MCF 10A (cell line): ENCODE measurements at regions of chr4 and their contacts with region 1.

Region 1: DNA sequence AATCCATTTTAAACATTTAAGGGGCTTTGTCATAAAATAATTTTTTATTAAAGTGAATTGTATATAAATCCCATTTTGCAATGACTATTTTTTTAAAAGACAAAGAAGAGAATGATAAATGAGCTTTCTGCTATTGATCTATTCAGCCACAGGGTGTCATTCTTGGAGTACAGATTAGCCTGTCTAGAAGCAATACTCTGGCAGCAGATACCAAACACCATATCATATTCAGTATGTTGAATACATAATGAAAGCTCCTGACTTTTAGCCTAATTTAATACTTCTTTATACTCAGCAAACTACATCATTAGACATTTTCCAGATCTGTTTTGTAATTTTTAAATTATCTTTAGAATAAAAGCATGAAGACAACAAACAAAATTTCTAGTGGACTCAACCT is 496.3 kb downstream of the PDGFC start:
- DNase-seq: peak; percentile 70
- H3K4me3 Mint-ChIP-seq: no peak overlapping the region
- H3K27ac Mint-ChIP-seq: peak overlapping the region; percentile 88
- H3K4me1 Mint-ChIP-seq: peaks cover 11% of the 10 kb centered on the region
- H3K27me3 Mint-ChIP-seq: no peaks in the 10 kb centered on the region
- CTCF ChIP-seq: peak; percentile 65

Region 2: DNA sequence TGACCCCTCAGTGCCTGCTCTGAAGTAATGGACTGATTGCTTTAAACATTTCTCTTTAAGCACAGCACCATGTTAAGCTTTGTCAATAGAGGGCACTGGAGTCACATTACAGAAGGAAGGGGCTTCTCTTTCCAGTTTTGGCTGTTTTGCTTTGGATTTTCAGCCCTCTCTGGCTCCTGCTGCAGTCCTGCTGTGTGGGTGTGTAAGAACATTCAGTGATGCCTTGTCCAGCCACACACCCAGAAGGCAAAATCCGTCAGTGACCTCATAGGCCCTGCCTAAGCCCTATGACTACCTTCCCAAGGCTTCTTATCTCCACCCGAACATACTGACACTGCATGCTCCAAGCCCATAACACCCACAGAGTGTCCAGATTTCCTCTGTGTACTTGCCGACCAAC is 306.3 kb before region 1 on chr4:
- CTCF ChIA-PET with region 1: interaction called, 20 read pairs
- POLR2A ChIA-PET with region 1: interaction called, 3 read pairs
- intact Hi-C with region 1: loop called (anchors 1 kb)
- DNase-seq: peak; percentile 76
- H3K4me3 Mint-ChIP-seq: no peak overlapping the region
- H3K27ac Mint-ChIP-seq: peak overlapping the region; percentile 56
- H3K4me1 Mint-ChIP-seq: peaks cover 17% of the 10 kb centered on the region
- H3K27me3 Mint-ChIP-seq: no peaks in the 10 kb centered on the region
- CTCF ChIP-seq: peak; percentile 43

Region 3: DNA sequence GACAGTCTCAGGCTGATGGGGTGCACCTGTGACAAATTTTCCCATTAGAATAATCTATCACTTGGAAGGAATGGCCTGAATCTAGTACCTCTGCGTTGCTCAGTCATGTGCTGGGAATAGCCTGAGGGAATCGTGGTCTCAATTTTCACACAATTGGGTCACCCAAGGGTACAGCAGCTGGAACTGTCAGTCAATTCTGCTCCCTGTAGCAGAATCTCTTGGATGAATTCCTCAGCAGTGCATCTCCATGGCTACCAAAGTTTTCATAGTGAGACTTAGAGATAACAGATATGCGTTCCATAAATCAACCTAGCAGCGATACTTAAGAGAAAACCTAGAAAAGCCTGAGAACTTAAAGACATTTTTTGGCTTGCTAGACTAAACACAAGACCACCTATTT is 232.9 kb before region 1 on chr4:
- CTCF ChIA-PET with region 1: no interaction called
- POLR2A ChIA-PET with region 1: no interaction called
- intact Hi-C with region 1: no loop called
- DNase-seq: no peak
- H3K4me3 Mint-ChIP-seq: no peak overlapping the region
- H3K27ac Mint-ChIP-seq: no peak overlapping the region
- H3K4me1 Mint-ChIP-seq: no peaks in the 10 kb centered on the region
- H3K27me3 Mint-ChIP-seq: no peaks in the 10 kb centered on the region
- CTCF ChIP-seq: no peak

Region 4: GRCh38 chr4:156558373-156559025 is 83.2 kb after region 1 on chr4:
- CTCF ChIA-PET with region 1: no interaction called
- POLR2A ChIA-PET with region 1: no interaction called
- intact Hi-C with region 1: no loop called
- DNase-seq: no peak
- H3K4me3 Mint-ChIP-seq: no peak overlapping the region
- H3K27ac Mint-ChIP-seq: peak overlapping the region; percentile 49
- H3K4me1 Mint-ChIP-seq: peaks cover 15% of the 10 kb centered on the region
- H3K27me3 Mint-ChIP-seq: no peaks in the 10 kb centered on the region
- CTCF ChIP-seq: no peak

Region 5: DNA sequence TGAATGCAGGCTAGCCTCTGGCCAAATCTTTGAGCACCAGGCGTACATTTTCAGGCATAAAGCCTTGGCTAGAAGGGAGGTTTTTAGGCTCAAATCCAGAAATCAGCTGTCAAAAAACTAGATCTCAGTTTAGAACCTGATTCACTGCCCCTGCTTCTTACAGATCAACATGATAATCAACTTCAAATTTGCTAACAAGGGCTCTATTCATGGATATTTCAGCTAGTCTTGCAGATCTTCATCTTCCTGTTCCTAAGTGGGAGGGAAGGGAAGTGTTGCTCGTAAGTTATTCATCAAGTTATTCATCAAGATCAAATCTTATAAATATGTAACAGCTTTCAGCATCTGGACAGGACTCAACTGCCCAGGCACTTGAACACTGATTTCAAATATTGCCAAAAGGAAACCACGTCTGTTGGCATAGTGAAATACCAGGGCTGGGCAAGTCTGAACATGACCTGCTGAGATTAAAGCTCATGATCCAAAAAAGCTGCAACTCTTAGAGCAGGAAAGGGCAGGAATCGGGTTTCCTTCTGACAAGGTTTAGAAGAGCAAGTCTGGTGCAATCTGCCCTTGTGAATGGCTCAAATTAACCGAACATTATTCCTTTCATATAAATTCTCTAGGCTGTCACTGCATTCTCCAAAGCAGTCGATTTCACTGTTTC is 296.0 kb after region 1 on chr4:
- CTCF ChIA-PET with region 1: interaction called, 4 read pairs
- POLR2A ChIA-PET with region 1: interaction called, 5 read pairs
- intact Hi-C with region 1: loop called (anchors 5 kb)
- DNase-seq: peak; percentile 98
- H3K4me3 Mint-ChIP-seq: peak overlapping the region; percentile 63
- H3K27ac Mint-ChIP-seq: peak overlapping the region; percentile 52
- H3K4me1 Mint-ChIP-seq: peaks cover 39% of the 10 kb centered on the region
- H3K27me3 Mint-ChIP-seq: no peaks in the 10 kb centered on the region
- CTCF ChIP-seq: no peak

Region 6: GRCh38 chr4:156941940-156942548 is 466.7 kb after region 1 on chr4:
- CTCF ChIA-PET with region 1: interaction called, 3 read pairs
- POLR2A ChIA-PET with region 1: interaction called, 6 read pairs
- intact Hi-C with region 1: loop called (anchors 5 kb)
- DNase-seq: peak; percentile 77
- H3K4me3 Mint-ChIP-seq: no peak overlapping the region
- H3K27ac Mint-ChIP-seq: peak overlapping the region; percentile 12
- H3K4me1 Mint-ChIP-seq: peaks cover 48% of the 10 kb centered on the region
- H3K27me3 Mint-ChIP-seq: no peaks in the 10 kb centered on the region
- CTCF ChIP-seq: no peak

Region 7: GRCh38 chr4:157075811-157076577 is 600.7 kb after region 1 on chr4 and contains the start of gene GLRB:
- CTCF ChIA-PET with region 1: no interaction called
- POLR2A ChIA-PET with region 1: no interaction called
- intact Hi-C with region 1: no loop called
- DNase-seq: peak; percentile 39
- H3K4me3 Mint-ChIP-seq: peak within 1 kb of the TSS; percentile 91
- H3K27ac Mint-ChIP-seq: no peak within 1 kb of the TSS
- H3K4me1 Mint-ChIP-seq: peaks cover 8% of the 10 kb centered on the region
- H3K27me3 Mint-ChIP-seq: no peaks in the 10 kb centered on the region
- CTCF ChIP-seq: no peak
- total RNA-seq, gene GLRB: 5.9 and 7.1 TPM in 2 replicates

Region 8: DNA sequence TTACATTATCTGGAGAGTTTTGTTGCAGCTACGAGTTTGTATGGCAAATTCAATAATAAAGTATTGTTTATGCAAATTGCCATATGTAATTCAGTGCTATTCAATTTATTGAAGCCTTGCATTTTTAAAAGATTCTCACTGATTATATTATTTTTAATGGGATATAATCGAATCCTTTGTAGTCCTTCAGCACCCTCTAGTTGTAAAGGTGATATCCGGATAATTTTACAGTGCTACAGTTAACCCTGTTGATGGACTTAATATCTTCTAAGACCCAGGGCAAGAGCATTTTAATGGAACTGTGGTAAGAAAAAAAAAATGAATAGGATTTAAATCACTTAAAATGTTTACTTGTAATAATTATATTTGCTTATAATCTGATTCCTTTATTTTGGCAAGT is 696.7 kb after region 1 on chr4:
- CTCF ChIA-PET with region 1: no interaction called
- POLR2A ChIA-PET with region 1: no interaction called
- intact Hi-C with region 1: loop called (anchors 1 kb)
- DNase-seq: peak; percentile 26
- H3K4me3 Mint-ChIP-seq: no peak overlapping the region
- H3K27ac Mint-ChIP-seq: no peak overlapping the region
- H3K4me1 Mint-ChIP-seq: no peaks in the 10 kb centered on the region
- H3K27me3 Mint-ChIP-seq: no peaks in the 10 kb centered on the region
- CTCF ChIP-seq: peak; percentile 25

Region 9: GRCh38 chr4:158172261-158173258 is 1697.2 kb after region 1 on chr4 and contains the start of gene GASK1B:
- CTCF ChIA-PET with region 1: no interaction called
- POLR2A ChIA-PET with region 1: no interaction called
- intact Hi-C with region 1: loop called (anchors 5 kb)
- DNase-seq: peak; percentile 68
- H3K4me3 Mint-ChIP-seq: peak within 1 kb of the TSS; percentile 71
- H3K27ac Mint-ChIP-seq: peak within 1 kb of the TSS; percentile 62
- H3K4me1 Mint-ChIP-seq: peaks cover 42% of the 10 kb centered on the region
- H3K27me3 Mint-ChIP-seq: no peaks in the 10 kb centered on the region
- CTCF ChIP-seq: peak; percentile 72
- total RNA-seq, gene GASK1B: 7.2 and 9.7 TPM in 2 replicates